PC-3 (cell line): ENCODE measurements at regions of chr16 and their contacts with region 1.

Region 1: GRCh38 chr16:53817117-53817755 is 113.3 kb downstream of the FTO start:
- DNase-seq: peak; percentile 72
- ATAC-seq: peak; percentile 80
- H3K4me3 ChIP-seq: no peak overlapping the region
- H3K27ac ChIP-seq: no peak overlapping the region
- H3K4me1 ChIP-seq: peaks cover 33% of the 10 kb centered on the region
- H3K27me3 ChIP-seq: no peaks in the 10 kb centered on the region
- CTCF ChIP-seq: no peak

Region 2: GRCh38 chr16:53781023-53781605 is 36.1 kb before region 1 on chr16:
- CTCF ChIA-PET with region 1: no interaction called
- POLR2A ChIA-PET with region 1: interaction called, 4 read pairs
- intact Hi-C with region 1: loop called (anchors 5 kb)
- DNase-seq: peak; percentile 71
- ATAC-seq: peak; percentile 77
- H3K4me3 ChIP-seq: no peak overlapping the region
- H3K27ac ChIP-seq: peak overlapping the region; percentile 66
- H3K4me1 ChIP-seq: peaks cover 66% of the 10 kb centered on the region
- H3K27me3 ChIP-seq: no peaks in the 10 kb centered on the region
- CTCF ChIP-seq: no peak

Region 3: GRCh38 chr16:53865494-53865863 is 48.2 kb after region 1 on chr16:
- CTCF ChIA-PET with region 1: no interaction called
- POLR2A ChIA-PET with region 1: no interaction called
- intact Hi-C with region 1: loop called (anchors 10 kb)
- DNase-seq: no peak
- ATAC-seq: peak; percentile 50
- H3K4me3 ChIP-seq: no peak overlapping the region
- H3K27ac ChIP-seq: peak overlapping the region; percentile 69
- H3K4me1 ChIP-seq: peaks cover 22% of the 10 kb centered on the region
- H3K27me3 ChIP-seq: no peaks in the 10 kb centered on the region
- CTCF ChIP-seq: no peak

Region 4: GRCh38 chr16:53892155-53892554 is 74.9 kb after region 1 on chr16:
- CTCF ChIA-PET with region 1: no interaction called
- POLR2A ChIA-PET with region 1: interaction called, 19 read pairs
- intact Hi-C with region 1: loop called (anchors 5 kb)
- DNase-seq: peak; percentile 50
- ATAC-seq: peak; percentile 44
- H3K4me3 ChIP-seq: no peak overlapping the region
- H3K27ac ChIP-seq: no peak overlapping the region
- H3K4me1 ChIP-seq: peaks cover 23% of the 10 kb centered on the region
- H3K27me3 ChIP-seq: no peaks in the 10 kb centered on the region
- CTCF ChIP-seq: peak; percentile 77